ENCODE measurements at regions of chr15 and their contacts with region 1.

Region 1: DNA sequence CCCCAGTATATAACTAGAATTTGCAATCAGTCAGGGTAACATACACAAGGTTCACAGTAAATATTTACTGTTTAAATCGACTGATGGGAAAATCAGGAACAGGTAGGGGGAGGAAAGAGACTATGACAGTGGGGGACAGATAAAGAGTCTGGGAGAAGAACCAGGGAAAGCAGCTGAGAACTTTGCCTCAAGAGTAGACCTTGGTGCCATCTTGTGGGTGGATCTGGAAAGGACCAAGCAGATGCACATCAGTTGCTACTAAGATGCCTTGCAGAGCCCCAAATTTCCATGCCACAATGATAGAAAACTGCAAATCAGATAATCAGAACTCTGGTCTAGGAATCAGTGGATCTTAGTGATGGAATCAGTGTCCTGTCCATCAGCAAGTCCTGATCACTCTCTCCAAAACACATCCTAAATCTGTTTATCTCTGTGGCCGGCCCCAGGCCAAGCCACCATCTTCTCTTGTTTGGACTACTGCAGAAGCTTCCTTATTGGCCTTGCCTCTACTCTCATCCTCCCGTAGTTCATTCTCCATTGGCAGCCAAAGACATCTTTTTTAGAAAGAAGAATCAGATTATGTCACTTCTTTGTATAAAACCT is 62.7 kb downstream of the PDE8A start:
- DNase-seq: peak; percentile 71
- ATAC-seq: peak; percentile 49
- H3K4me3 ChIP-seq: no peak overlapping the region
- H3K4me3 Mint-ChIP-seq: no peak overlapping the region
- H3K27ac ChIP-seq: no peak overlapping the region
- H3K27ac Mint-ChIP-seq: no peak overlapping the region
- H3K4me1 ChIP-seq: peaks cover 3 to 9% of the 10 kb centered on the region in 2 donors
- H3K4me1 Mint-ChIP-seq: peaks cover 32% of the 10 kb centered on the region
- H3K27me3 ChIP-seq: no peaks in the 10 kb centered on the region
- H3K27me3 Mint-ChIP-seq: no peaks in the 10 kb centered on the region
- CTCF ChIP-seq: peak; percentile 67

Region 2: GRCh38 chr15:84955089-84955848 is 89.1 kb before region 1 on chr15:
- CTCF ChIA-PET with region 1: interaction called, 21 read pairs
- POLR2A ChIA-PET with region 1: no interaction called
- intact Hi-C with region 1: loop called (anchors 1 kb)
- DNase-seq: peak; percentile 61
- ATAC-seq: peak; percentile 45
- H3K4me3 ChIP-seq: no peak overlapping the region
- H3K4me3 Mint-ChIP-seq: no peak overlapping the region
- H3K27ac ChIP-seq: no peak overlapping the region
- H3K27ac Mint-ChIP-seq: no peak overlapping the region
- H3K4me1 ChIP-seq: peaks cover 4 to 5% of the 10 kb centered on the region in 2 donors
- H3K4me1 Mint-ChIP-seq: peaks cover 9% of the 10 kb centered on the region
- H3K27me3 ChIP-seq: peaks cover 0 to 8% (median 0%) of the 10 kb centered on the region in 4 experiments
- H3K27me3 Mint-ChIP-seq: peaks cover 20% of the 10 kb centered on the region
- CTCF ChIP-seq: peak; percentile 56

Region 3: GRCh38 chr15:84987949-84988624 is 56.3 kb before region 1 on chr15:
- CTCF ChIA-PET with region 1: interaction called, 11 read pairs
- POLR2A ChIA-PET with region 1: no interaction called
- intact Hi-C with region 1: loop called (anchors 10 kb)
- DNase-seq: peak; percentile 61
- ATAC-seq: peak; percentile 60
- H3K4me3 ChIP-seq: peak overlapping the region in 3 of 5 experiments; percentile 10 to 25 (median 22)
- H3K4me3 Mint-ChIP-seq: peak overlapping the region; percentile 56
- H3K27ac ChIP-seq: peak overlapping the region; percentile 53 to 65
- H3K27ac Mint-ChIP-seq: peak overlapping the region; percentile 86
- H3K4me1 ChIP-seq: peaks cover 40 to 48% of the 10 kb centered on the region in 2 donors
- H3K4me1 Mint-ChIP-seq: peaks cover 70% of the 10 kb centered on the region
- H3K27me3 ChIP-seq: no peaks in the 10 kb centered on the region
- H3K27me3 Mint-ChIP-seq: no peaks in the 10 kb centered on the region
- CTCF ChIP-seq: no peak

Region 4: DNA sequence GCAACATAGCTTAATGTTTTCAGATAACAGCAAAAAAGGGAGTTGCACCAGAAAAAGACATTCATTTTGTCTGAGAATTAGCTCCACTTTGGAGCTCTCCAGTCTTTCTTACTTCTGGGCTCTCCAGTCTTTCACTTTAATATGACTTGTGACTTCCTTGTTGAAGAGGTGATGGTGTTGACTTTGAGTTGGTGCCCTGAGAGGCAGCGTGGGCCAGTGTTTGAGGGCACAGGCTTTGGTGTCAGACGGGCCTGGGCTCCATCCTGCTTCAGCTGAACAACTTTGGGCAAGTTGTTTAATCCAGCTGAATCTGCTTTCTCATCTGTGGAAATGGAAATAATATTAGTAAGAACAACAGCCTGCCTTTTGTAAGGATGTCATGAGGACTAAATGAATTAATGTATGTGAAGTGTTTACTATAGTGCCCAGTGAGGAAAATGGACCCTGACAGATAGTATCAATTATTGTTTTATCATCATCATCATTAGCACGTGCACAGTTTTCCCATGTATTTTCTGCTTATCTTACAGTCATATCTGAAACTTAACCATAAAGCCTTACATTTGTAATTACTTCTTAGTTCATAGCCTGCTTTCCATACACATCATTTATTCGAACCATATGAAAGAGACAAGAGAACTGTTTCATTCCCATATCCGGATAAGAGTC is 45.7 kb after region 1 on chr15:
- CTCF ChIA-PET with region 1: no interaction called
- POLR2A ChIA-PET with region 1: no interaction called
- intact Hi-C with region 1: no loop called
- DNase-seq: no peak
- ATAC-seq: no peak
- H3K4me3 ChIP-seq: no peak overlapping the region
- H3K4me3 Mint-ChIP-seq: no peak overlapping the region
- H3K27ac ChIP-seq: no peak overlapping the region
- H3K27ac Mint-ChIP-seq: no peak overlapping the region
- H3K4me1 ChIP-seq: no peaks in the 10 kb centered on the region
- H3K4me1 Mint-ChIP-seq: no peaks in the 10 kb centered on the region
- H3K27me3 ChIP-seq: no peaks in the 10 kb centered on the region
- H3K27me3 Mint-ChIP-seq: no peaks in the 10 kb centered on the region
- CTCF ChIP-seq: no peak